ENCODE measurements at regions of chr6 and their contacts with region 1.

Region 1: GRCh38 chr6:159720708-159721107 is 6.6 kb upstream of the WTAP start:
- DNase-seq: peak in 1 of 2 experiments; percentile 67
- H3K4me3 ChIP-seq: no peak overlapping the region
- H3K4me3 Mint-ChIP-seq: no peak overlapping the region
- H3K27ac Mint-ChIP-seq: no peak overlapping the region
- H3K4me1 ChIP-seq: no peaks in the 10 kb centered on the region
- H3K4me1 Mint-ChIP-seq: peaks cover 6% of the 10 kb centered on the region
- H3K27me3 ChIP-seq: no peaks in the 10 kb centered on the region
- H3K27me3 Mint-ChIP-seq: no peaks in the 10 kb centered on the region
- CTCF ChIP-seq: peak; percentile 42

Region 2: GRCh38 chr6:159753081-159753872 is 32.6 kb after region 1 on chr6:
- CTCF ChIA-PET with region 1: no interaction called
- POLR2A ChIA-PET with region 1: no interaction called
- intact Hi-C with region 1: no loop called
- DNase-seq: no peak
- H3K4me3 ChIP-seq: no peak overlapping the region
- H3K4me3 Mint-ChIP-seq: no peak overlapping the region
- H3K27ac Mint-ChIP-seq: no peak overlapping the region
- H3K4me1 ChIP-seq: no peaks in the 10 kb centered on the region
- H3K4me1 Mint-ChIP-seq: peaks cover 6% of the 10 kb centered on the region
- H3K27me3 ChIP-seq: no peaks in the 10 kb centered on the region
- H3K27me3 Mint-ChIP-seq: no peaks in the 10 kb centered on the region
- CTCF ChIP-seq: no peak

Region 3: GRCh38 chr6:159852877-159853276 is 132.2 kb after region 1 on chr6:
- CTCF ChIA-PET with region 1: no interaction called
- POLR2A ChIA-PET with region 1: no interaction called
- intact Hi-C with region 1: loop called (anchors 2 kb)
- DNase-seq: peak in 1 of 2 experiments; percentile 32
- H3K4me3 ChIP-seq: no peak overlapping the region
- H3K4me3 Mint-ChIP-seq: no peak overlapping the region
- H3K27ac Mint-ChIP-seq: no peak overlapping the region
- H3K4me1 ChIP-seq: no peaks in the 10 kb centered on the region
- H3K4me1 Mint-ChIP-seq: no peaks in the 10 kb centered on the region
- H3K27me3 ChIP-seq: no peaks in the 10 kb centered on the region
- H3K27me3 Mint-ChIP-seq: peaks cover 8% of the 10 kb centered on the region
- CTCF ChIP-seq: peak in 1 of 2 experiments; percentile 21